ENCODE measurements at regions of chr17 and their contacts with region 1.

Region 1: DNA sequence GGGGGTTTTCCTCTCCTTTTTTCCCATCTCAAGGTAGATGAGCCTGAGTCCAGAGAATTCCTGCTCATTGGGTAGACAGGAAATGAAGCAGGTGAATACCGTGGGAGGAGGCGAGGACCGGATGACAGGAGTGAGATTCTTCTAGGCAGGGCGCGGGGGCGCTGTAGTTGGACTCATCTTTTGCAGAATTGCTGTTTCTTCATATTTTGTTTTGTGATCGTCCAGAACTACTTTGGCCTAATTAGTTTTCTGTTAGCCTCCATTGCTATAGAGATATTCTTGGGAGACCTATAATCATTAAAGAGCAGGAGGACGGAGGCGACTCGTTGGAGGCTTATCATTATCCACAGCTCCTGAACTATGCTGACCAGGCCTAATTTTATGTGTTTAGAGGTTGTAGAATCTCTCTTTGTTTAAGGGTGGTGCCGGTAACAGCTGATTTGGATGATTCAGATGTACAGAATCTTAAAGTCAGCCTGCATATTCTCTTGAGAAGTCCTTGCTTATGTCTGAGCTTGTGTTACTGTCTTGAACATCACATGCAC is 650 bp downstream of the ATP6V0A1 start:
- DNase-seq: peak; percentile 59
- H3K4me3 Mint-ChIP-seq: peak overlapping the region; percentile 92
- H3K27ac Mint-ChIP-seq: no peak overlapping the region
- H3K4me1 Mint-ChIP-seq: peaks cover 41% of the 10 kb centered on the region
- H3K27me3 Mint-ChIP-seq: no peaks in the 10 kb centered on the region

Region 2: GRCh38 chr17:42287926-42288802 is 171.2 kb before region 1 on chr17 and contains the start of gene STAT5A:
- CTCF ChIA-PET with region 1: no interaction called
- POLR2A ChIA-PET with region 1: no interaction called
- intact Hi-C with region 1: no loop called
- DNase-seq: peak; percentile 86
- H3K4me3 Mint-ChIP-seq: peak within 1 kb of the TSS; percentile 82
- H3K27ac Mint-ChIP-seq: peak within 1 kb of the TSS; percentile 94
- H3K4me1 Mint-ChIP-seq: peaks cover 60% of the 10 kb centered on the region
- H3K27me3 Mint-ChIP-seq: no peaks in the 10 kb centered on the region
- total RNA-seq, gene STAT5A: 211 to 215 TPM

Region 3: GRCh38 chr17:42347198-42347597 is 112.1 kb before region 1 on chr17:
- CTCF ChIA-PET with region 1: no interaction called
- POLR2A ChIA-PET with region 1: no interaction called
- intact Hi-C with region 1: no loop called
- DNase-seq: no peak
- H3K4me3 Mint-ChIP-seq: no peak overlapping the region
- H3K27ac Mint-ChIP-seq: peak overlapping the region; percentile 61
- H3K4me1 Mint-ChIP-seq: peaks cover 50% of the 10 kb centered on the region
- H3K27me3 Mint-ChIP-seq: no peaks in the 10 kb centered on the region

Region 4: DNA sequence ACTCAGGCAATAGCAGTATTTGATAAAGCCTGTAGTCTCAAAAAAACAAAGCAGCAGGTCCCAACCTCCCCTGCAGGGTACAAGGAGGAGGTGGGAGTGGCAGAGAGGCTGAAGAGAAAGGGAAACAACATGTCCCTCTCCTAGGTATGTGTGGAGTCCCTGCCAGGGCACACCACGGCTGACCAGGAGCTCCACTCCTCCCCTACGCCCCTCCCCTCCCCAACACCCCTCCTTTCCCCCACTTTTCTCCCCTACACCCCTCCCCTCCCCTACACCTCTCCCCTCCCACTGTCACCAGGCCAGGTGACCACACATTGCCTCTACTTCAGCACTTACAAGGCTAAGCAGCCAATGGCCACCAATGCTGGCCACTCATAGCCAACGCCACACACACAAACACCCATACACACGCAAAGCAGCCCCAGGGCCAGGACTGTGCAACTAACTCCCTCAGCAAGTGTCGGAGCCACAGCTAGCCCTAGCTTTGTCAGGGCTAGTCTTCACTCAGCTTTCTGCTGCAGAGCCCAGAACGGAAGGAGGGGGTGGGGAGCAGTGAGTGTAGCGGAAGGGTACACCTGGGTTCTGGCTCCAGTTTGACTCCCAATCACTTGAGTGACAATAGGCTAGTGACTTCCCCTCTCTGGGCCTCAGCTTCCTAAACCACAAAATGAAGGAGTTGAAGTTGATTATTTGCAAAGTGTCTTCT is 44.5 kb before region 1 on chr17:
- CTCF ChIA-PET with region 1: no interaction called
- POLR2A ChIA-PET with region 1: no interaction called
- intact Hi-C with region 1: loop called (anchors 5 kb)
- DNase-seq: peak; percentile 87
- H3K4me3 Mint-ChIP-seq: peak overlapping the region; percentile 49
- H3K27ac Mint-ChIP-seq: peak overlapping the region; percentile 69
- H3K4me1 Mint-ChIP-seq: peaks cover 17% of the 10 kb centered on the region
- H3K27me3 Mint-ChIP-seq: no peaks in the 10 kb centered on the region

Region 5: GRCh38 chr17:42438600-42439567 is 20.4 kb before region 1 on chr17:
- CTCF ChIA-PET with region 1: interaction called, 10 read pairs
- POLR2A ChIA-PET with region 1: no interaction called
- intact Hi-C with region 1: no loop called
- DNase-seq: peak; percentile 57
- H3K4me3 Mint-ChIP-seq: no peak overlapping the region
- H3K27ac Mint-ChIP-seq: no peak overlapping the region
- H3K4me1 Mint-ChIP-seq: peaks cover 3% of the 10 kb centered on the region
- H3K27me3 Mint-ChIP-seq: peaks cover 2% of the 10 kb centered on the region

Region 6: DNA sequence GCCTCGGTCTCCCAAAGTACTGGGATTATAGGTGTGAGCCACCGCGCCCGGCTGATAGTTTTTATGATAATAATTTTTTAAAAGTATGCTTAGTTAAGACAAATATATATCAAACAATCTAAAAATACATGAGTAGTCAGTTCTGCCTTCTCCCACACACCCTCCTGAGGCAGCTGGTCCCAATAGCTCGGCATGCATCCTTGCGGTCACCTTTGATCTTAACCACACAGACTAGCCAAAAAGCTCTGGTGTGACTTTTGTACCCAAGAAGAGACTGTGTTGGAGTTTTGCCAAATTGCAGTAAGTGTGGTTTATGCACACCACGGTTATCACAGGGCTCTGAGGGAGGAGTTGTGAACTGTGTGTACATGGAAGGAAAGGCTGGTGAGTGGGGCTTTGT is 25.0 kb after region 1 on chr17:
- CTCF ChIA-PET with region 1: no interaction called
- POLR2A ChIA-PET with region 1: no interaction called
- intact Hi-C with region 1: loop called (anchors 2 kb)
- DNase-seq: peak; percentile 88
- H3K4me3 Mint-ChIP-seq: no peak overlapping the region
- H3K27ac Mint-ChIP-seq: peak overlapping the region; percentile 28
- H3K4me1 Mint-ChIP-seq: peaks cover 23% of the 10 kb centered on the region
- H3K27me3 Mint-ChIP-seq: peaks cover 2% of the 10 kb centered on the region